ENCODE measurements at regions of chr7 and their contacts with region 1.

Region 1: GRCh38 chr7:47827351-47827756 is 120.9 kb downstream of the PKD1L1 start:
- DNase-seq: no peak

Region 2: DNA sequence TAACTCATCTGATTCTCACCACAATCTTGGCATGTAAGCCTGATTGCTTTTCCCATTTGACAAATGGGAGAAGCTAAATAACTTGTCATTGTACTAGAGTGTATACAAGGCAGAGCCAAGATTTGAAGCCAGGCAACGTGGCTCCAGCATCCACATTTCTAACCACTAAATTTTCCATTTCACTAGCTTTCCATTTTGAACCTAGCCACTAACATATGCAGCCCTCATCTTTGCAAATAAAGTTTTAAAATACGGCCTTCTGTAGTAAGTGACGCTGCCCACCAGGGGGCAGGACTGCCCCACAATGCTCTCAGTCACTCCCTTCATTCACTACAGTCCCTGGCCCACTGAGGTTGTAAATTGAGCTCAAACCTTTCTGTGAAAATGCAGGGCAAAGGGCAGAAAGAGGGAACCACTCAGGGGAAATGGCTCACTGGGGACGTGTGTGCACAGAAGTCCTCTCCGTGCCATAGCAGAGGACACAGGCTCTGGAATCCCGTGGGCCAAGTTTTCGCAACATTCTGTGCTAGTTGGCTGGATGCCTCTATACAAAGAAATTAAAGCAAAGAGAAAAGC is 561.1 kb before region 1 on chr7:
- intact Hi-C with region 1: loop called in 1 of 2 experiments (anchors 10 kb)
- DNase-seq: peak; percentile 78

Region 3: GRCh38 chr7:47852330-47853245 is 25.2 kb after region 1 on chr7:
- intact Hi-C with region 1: no loop called
- DNase-seq: no peak

Measured in posterior vena cava (tissue), 2 donors.